Activated B cell treated with CpG ODN at 0.5 μM for 24 hours (primary cell): ENCODE measurements at regions of chr1 and their contacts with region 1.

Region 1: GRCh38 chr1:24930204-24931145 is at the start of gene RUNX3:
- DNase-seq: peak; percentile 94
- ATAC-seq: peak; percentile 87
- H3K4me3 Mint-ChIP-seq: peak within 1 kb of the TSS; percentile 98
- H3K27ac Mint-ChIP-seq: peak within 1 kb of the TSS; percentile 96
- H3K4me1 Mint-ChIP-seq: peaks cover 73% of the 10 kb centered on the region
- H3K27me3 Mint-ChIP-seq: no peaks in the 10 kb centered on the region
- CTCF ChIP-seq: no peak
- total RNA-seq, gene RUNX3: 141 and 153 TPM in 2 replicates

Region 2: DNA sequence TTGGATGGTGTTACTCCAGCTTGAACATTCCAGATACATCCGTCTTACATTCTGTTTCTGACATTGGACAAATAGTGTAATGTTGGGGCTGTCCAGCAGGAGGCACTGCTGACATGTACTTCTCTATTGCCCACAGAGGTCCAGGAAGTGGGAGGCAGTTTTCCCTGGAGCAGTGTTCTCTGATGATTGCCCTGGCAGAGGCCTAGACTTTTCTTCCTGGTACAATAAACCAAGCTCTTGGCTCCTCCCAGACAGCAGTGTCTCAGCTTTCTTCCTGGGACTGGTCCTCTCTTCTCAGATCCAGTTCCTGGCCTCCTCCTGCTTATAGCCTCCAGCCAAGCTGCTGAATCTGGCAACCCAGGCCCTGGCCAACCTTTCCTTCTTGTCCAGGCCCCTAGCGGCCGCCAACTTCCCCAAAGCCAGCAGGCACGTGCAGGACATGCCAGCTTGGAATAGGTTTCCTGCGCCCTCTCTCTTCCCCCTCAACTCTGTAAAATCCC is 728.5 kb before region 1 on chr1:
- CTCF ChIA-PET with region 1: no interaction called
- POLR2A ChIA-PET with region 1: no interaction called
- intact Hi-C with region 1: loop called (anchors 10 kb)
- DNase-seq: no peak
- ATAC-seq: peak; percentile 48
- H3K4me3 Mint-ChIP-seq: no peak overlapping the region
- H3K27ac Mint-ChIP-seq: no peak overlapping the region
- H3K4me1 Mint-ChIP-seq: peaks cover 35% of the 10 kb centered on the region
- H3K27me3 Mint-ChIP-seq: no peaks in the 10 kb centered on the region
- CTCF ChIP-seq: no peak

Region 3: GRCh38 chr1:24536391-24536840 is 394.1 kb before region 1 on chr1:
- CTCF ChIA-PET with region 1: no interaction called
- POLR2A ChIA-PET with region 1: no interaction called
- intact Hi-C with region 1: no loop called
- DNase-seq: peak; percentile 51
- ATAC-seq: peak; percentile 73
- H3K4me3 Mint-ChIP-seq: peak overlapping the region; percentile 81
- H3K27ac Mint-ChIP-seq: peak overlapping the region; percentile 99
- H3K4me1 Mint-ChIP-seq: peaks cover 74% of the 10 kb centered on the region
- H3K27me3 Mint-ChIP-seq: no peaks in the 10 kb centered on the region
- CTCF ChIP-seq: no peak

Region 4: GRCh38 chr1:24847995-24848881 is 82.2 kb before region 1 on chr1:
- CTCF ChIA-PET with region 1: interaction called, 19 read pairs
- POLR2A ChIA-PET with region 1: interaction called, 47 read pairs
- intact Hi-C with region 1: loop called (anchors 1 kb)
- DNase-seq: peak; percentile 91
- ATAC-seq: peak; percentile 95
- H3K4me3 Mint-ChIP-seq: peak overlapping the region; percentile 74
- H3K27ac Mint-ChIP-seq: peak overlapping the region; percentile 50
- H3K4me1 Mint-ChIP-seq: peaks cover 18% of the 10 kb centered on the region
- H3K27me3 Mint-ChIP-seq: no peaks in the 10 kb centered on the region
- CTCF ChIP-seq: peak; percentile 54

Region 5: GRCh38 chr1:24964811-24965570 is 34.5 kb after region 1 on chr1:
- CTCF ChIA-PET with region 1: interaction called, 5 read pairs
- POLR2A ChIA-PET with region 1: interaction called, 17 read pairs
- intact Hi-C with region 1: loop called (anchors 1 kb)
- DNase-seq: peak; percentile 67
- ATAC-seq: peak; percentile 84
- H3K4me3 Mint-ChIP-seq: peak overlapping the region; percentile 76
- H3K27ac Mint-ChIP-seq: peak overlapping the region; percentile 88
- H3K4me1 Mint-ChIP-seq: peaks cover 57% of the 10 kb centered on the region
- H3K27me3 Mint-ChIP-seq: no peaks in the 10 kb centered on the region
- CTCF ChIP-seq: no peak

Region 6: GRCh38 chr1:25001125-25001915 is 70.8 kb after region 1 on chr1:
- CTCF ChIA-PET with region 1: no interaction called
- POLR2A ChIA-PET with region 1: no interaction called
- intact Hi-C with region 1: no loop called
- DNase-seq: no peak
- ATAC-seq: peak; percentile 64
- H3K4me3 Mint-ChIP-seq: no peak overlapping the region
- H3K27ac Mint-ChIP-seq: no peak overlapping the region
- H3K4me1 Mint-ChIP-seq: peaks cover 29% of the 10 kb centered on the region
- H3K27me3 Mint-ChIP-seq: no peaks in the 10 kb centered on the region
- CTCF ChIP-seq: no peak

Region 7: DNA sequence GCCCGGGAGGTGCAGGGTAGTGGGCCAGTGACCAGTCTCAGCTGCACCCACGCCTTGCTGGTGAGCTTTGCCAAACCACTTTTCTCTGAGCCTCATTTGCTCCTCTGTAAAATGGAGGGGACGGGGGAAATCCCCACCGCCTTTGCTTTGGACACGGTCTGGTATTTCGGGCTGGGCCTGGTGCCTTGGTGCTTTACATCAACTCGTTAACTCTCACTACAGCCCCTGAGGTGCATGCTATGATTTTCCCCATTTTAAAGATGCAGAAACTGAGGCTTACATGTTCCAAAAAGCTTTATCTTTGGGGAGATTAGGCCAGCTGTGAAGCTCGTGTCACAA is 115.7 kb after region 1 on chr1:
- CTCF ChIA-PET with region 1: interaction called, 4 read pairs
- POLR2A ChIA-PET with region 1: interaction called, 11 read pairs
- intact Hi-C with region 1: no loop called
- DNase-seq: no peak
- ATAC-seq: peak; percentile 93
- H3K4me3 Mint-ChIP-seq: no peak overlapping the region
- H3K27ac Mint-ChIP-seq: no peak overlapping the region
- H3K4me1 Mint-ChIP-seq: peaks cover 8% of the 10 kb centered on the region
- H3K27me3 Mint-ChIP-seq: no peaks in the 10 kb centered on the region
- CTCF ChIP-seq: no peak

Region 8: GRCh38 chr1:25232027-25232865 is 301.8 kb after region 1 on chr1 and contains the start of gene SYF2:
- CTCF ChIA-PET with region 1: no interaction called
- POLR2A ChIA-PET with region 1: interaction called, 10 read pairs
- intact Hi-C with region 1: loop called (anchors 10 kb)
- DNase-seq: peak; percentile 81
- ATAC-seq: peak; percentile 87
- H3K4me3 Mint-ChIP-seq: no peak within 1 kb of the TSS
- H3K27ac Mint-ChIP-seq: no peak within 1 kb of the TSS
- H3K4me1 Mint-ChIP-seq: peaks cover 36% of the 10 kb centered on the region
- H3K27me3 Mint-ChIP-seq: no peaks in the 10 kb centered on the region
- CTCF ChIP-seq: no peak
- total RNA-seq, gene SYF2: 51.1 and 53.9 TPM in 2 replicates